ENCODE measurements at regions of chr19 and their contacts with region 1.

Region 1: DNA sequence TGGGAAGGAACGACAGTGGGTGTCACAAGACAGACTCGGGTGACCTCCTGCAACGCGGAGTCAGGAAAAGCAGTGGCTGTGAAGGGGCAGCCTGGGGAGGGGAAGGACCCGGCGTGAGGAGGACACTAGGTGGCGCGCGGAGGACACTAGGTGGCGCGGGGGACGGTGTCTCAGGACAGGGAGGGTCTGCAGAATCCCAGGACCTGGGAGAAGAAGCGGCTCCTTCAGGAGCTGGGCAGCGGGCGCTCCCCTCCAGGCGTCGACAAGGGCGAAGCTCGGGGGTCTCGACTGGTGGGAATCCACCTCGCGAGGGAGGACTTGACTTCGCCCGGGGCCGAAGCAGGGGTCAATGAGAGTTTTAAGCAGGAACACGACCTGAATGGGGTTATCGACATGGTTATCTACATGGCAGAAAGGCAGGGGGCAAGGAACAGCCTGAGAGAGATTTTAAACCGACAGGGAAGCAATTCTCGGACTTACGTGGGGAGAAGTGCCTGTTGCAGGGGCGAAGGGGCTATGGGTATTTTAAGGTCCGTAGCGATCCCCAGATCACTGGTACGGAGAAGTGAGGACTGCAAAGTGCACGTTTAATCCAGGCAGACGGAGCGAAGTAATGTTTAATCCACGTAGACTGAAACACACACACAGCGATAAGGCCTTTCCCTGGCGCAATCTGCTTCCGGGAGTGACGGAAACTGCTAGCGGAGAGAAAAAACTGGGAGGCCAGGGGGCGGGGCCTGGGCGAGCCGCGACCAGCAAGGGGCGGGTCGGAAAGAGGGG is at the start of gene ZNF616:
- DNase-seq: peak; percentile 93 to 96 (median 95)
- H3K4me3 ChIP-seq: peak within 1 kb of the TSS; percentile 82 to 100 (median 96)
- H3K27ac ChIP-seq: peak within 1 kb of the TSS; percentile 85 to 93
- H3K4me1 ChIP-seq: peaks cover 0 to 21% (median 16%) of the 10 kb centered on the region in 4 experiments
- H3K27me3 ChIP-seq: no peaks in the 10 kb centered on the region

Region 2: DNA sequence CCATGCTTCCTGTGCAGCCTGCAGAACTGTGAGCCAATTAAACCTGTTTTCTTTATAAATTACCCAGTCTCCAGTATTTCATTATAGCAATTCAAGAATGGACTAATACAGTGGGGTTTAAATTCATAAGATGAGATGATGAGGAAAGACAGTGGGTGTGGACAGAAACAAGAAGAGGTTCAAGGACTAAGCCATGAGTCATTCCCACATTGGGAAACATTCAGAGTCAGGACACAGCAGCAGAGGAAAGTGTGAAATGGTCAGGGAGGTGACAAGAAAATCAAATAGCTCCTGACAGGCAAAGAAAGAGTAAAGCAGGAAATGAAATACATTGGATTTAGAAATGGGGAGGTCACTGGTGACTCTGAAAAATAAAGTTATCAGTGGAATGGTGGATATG is 53.0 kb before region 1 on chr19:
- CTCF ChIA-PET with region 1: no interaction called
- POLR2A ChIA-PET with region 1: no interaction called
- DNase-seq: no peak
- H3K4me3 ChIP-seq: no peak overlapping the region
- H3K27ac ChIP-seq: no peak overlapping the region
- H3K4me1 ChIP-seq: no peaks in the 10 kb centered on the region
- H3K27me3 ChIP-seq: no peaks in the 10 kb centered on the region

Region 3: GRCh38 chr19:52155596-52156359 is 16.3 kb after region 1 on chr19:
- CTCF ChIA-PET with region 1: no interaction called
- POLR2A ChIA-PET with region 1: no interaction called
- DNase-seq: no peak
- H3K4me3 ChIP-seq: no peak overlapping the region
- H3K27ac ChIP-seq: no peak overlapping the region
- H3K4me1 ChIP-seq: no peaks in the 10 kb centered on the region
- H3K27me3 ChIP-seq: no peaks in the 10 kb centered on the region

Region 4: GRCh38 chr19:52237771-52238400 is 98.4 kb after region 1 on chr19:
- CTCF ChIA-PET with region 1: interaction called, 11 read pairs
- POLR2A ChIA-PET with region 1: no interaction called
- DNase-seq: peak; percentile 47 to 69 (median 65)
- H3K4me3 ChIP-seq: no peak overlapping the region
- H3K27ac ChIP-seq: no peak overlapping the region
- H3K4me1 ChIP-seq: no peaks in the 10 kb centered on the region
- H3K27me3 ChIP-seq: no peaks in the 10 kb centered on the region